WTC11 (cell line): ENCODE measurements at regions of chr5 and their contacts with region 1.

Region 1: GRCh38 chr5:170225326-170226128 is 7.3 kb upstream of the C5orf58 start:
- DNase-seq: peak; percentile 81
- ATAC-seq: peak; percentile 60
- H3K4me3 Mint-ChIP-seq: no peak overlapping the region
- H3K27ac Mint-ChIP-seq: no peak overlapping the region
- H3K4me1 Mint-ChIP-seq: peaks cover 60% of the 10 kb centered on the region
- H3K27me3 Mint-ChIP-seq: peaks cover 6% of the 10 kb centered on the region
- CTCF ChIP-seq: peak; percentile 53; the same call in 1 of the 2 replicates

Region 2: DNA sequence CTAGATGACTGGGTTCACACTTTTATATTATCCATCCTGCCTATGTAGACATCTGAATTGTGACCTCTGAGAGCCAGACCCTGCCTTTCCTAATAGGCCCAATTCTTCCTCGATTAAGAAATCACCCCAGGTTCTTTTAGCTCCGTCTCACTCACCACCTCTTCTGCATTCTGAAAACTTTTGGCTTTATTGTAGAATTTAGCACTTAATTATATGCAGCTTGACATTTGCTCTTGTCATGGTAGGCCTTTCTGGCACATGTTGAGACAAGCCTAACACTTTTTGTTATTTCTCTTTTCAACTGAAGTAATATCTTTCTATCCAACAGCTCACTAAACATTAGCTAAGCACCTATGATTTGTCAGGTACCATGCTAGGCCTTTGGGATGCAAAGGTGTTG is 408.5 kb before region 1 on chr5:
- CTCF ChIA-PET with region 1: no interaction called
- POLR2A ChIA-PET with region 1: no interaction called
- DNase-seq: no peak
- ATAC-seq: no peak
- H3K4me3 Mint-ChIP-seq: no peak overlapping the region
- H3K27ac Mint-ChIP-seq: no peak overlapping the region
- H3K4me1 Mint-ChIP-seq: peaks cover 18% of the 10 kb centered on the region
- H3K27me3 Mint-ChIP-seq: peaks cover 8% of the 10 kb centered on the region; the same call in 1 of the 2 replicates
- CTCF ChIP-seq: no peak

Region 3: DNA sequence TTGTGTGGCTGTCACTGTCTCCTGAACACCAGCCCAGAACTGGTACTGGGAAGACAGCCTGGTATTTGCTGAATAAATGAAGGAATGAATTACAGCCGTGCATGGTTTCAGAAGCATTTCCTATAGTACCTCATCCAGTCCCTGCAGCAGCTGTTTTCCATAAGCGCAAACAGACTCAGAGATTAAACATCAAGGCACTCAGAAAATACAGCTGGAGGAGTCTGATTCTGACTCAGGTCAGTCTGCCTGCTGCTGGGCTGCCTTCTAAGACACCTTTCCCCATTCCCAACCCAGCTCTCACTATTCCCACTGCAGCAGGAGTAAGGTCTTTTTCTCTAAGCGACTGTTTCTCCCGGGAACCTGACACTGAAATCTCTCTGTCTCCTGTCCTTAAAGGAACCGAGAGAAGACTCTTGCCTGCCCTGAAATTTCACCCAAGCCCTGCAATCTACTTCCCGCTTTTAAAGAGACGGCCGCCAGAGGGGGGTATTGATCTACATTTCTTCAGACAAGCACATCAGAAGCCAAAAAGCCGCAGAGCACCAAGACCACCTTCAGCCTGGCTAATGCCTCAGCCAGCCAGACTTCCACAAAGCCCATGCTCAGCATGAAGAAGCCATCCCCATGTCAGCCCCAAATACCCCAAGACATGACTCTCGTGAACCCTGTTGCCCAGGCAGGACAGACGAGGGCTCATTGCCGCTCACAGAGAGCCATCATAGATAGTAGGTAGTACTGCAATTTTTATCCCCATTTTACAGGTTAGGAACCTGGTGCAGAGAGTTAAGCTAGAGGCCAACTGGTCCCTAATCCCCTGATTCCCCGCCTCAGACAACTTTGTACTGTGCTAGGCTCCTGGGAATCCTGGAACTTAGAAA is 125.2 kb before region 1 on chr5:
- CTCF ChIA-PET with region 1: interaction called, 12 read pairs
- POLR2A ChIA-PET with region 1: no interaction called
- DNase-seq: peak; percentile 90
- ATAC-seq: peak; percentile 89
- H3K4me3 Mint-ChIP-seq: no peak overlapping the region
- H3K27ac Mint-ChIP-seq: no peak overlapping the region
- H3K4me1 Mint-ChIP-seq: peaks cover 8% of the 10 kb centered on the region
- H3K27me3 Mint-ChIP-seq: peaks cover 5% of the 10 kb centered on the region; the same call in 1 of the 2 replicates
- CTCF ChIP-seq: peak; percentile 68

Region 4: GRCh38 chr5:170267431-170268152 is 42.1 kb after region 1 on chr5:
- CTCF ChIA-PET with region 1: interaction called, 64 read pairs
- POLR2A ChIA-PET with region 1: no interaction called
- DNase-seq: peak; percentile 84
- ATAC-seq: peak; percentile 88
- H3K4me3 Mint-ChIP-seq: no peak overlapping the region
- H3K27ac Mint-ChIP-seq: no peak overlapping the region
- H3K4me1 Mint-ChIP-seq: peaks cover 57% of the 10 kb centered on the region
- H3K27me3 Mint-ChIP-seq: peaks cover 4% of the 10 kb centered on the region; the same call in 1 of the 2 replicates
- CTCF ChIP-seq: peak; percentile 81

Region 5: DNA sequence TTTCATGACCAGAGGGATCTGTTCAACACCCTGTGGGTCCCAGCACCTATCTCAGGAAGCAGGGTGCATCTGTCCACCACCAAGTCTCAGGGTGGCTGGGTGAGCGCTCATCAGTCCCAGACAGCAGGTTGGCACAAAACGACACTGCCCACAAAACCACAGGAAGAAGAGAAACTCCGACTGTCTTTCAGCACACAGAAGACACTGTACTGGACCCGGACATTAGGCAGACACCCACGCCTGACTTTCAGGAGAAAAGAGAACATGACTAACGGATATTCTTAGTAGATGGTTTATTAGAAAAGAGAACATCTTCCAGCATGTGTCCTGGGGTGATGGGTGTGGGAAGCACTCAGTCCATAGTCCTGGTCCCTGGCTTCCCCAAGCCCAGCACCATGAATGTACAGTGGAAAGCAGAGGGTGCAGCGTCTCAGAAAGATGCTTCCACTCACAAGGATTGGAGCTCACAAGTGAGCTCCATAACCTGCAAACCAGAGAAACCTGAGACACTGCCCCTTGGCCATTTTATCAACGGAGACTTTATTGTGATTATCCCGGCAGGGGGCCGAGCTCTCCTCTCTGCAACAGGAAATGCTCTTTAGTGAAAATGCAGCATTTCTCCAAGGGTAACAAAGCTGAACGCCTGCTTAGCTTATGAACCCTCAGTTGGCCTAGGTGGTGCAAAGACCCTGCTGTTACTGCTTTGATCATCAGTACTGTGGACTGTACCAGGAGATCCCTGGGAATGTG is 107.8 kb after region 1 on chr5:
- CTCF ChIA-PET with region 1: interaction called, 92 read pairs
- POLR2A ChIA-PET with region 1: no interaction called
- DNase-seq: peak; percentile 61
- ATAC-seq: peak; percentile 40
- H3K4me3 Mint-ChIP-seq: peak overlapping the region; percentile 47
- H3K27ac Mint-ChIP-seq: peak overlapping the region; percentile 96
- H3K4me1 Mint-ChIP-seq: peaks cover 75% of the 10 kb centered on the region
- H3K27me3 Mint-ChIP-seq: no peaks in the 10 kb centered on the region; the same call in 1 of the 2 replicates
- CTCF ChIP-seq: no peak

Region 6: DNA sequence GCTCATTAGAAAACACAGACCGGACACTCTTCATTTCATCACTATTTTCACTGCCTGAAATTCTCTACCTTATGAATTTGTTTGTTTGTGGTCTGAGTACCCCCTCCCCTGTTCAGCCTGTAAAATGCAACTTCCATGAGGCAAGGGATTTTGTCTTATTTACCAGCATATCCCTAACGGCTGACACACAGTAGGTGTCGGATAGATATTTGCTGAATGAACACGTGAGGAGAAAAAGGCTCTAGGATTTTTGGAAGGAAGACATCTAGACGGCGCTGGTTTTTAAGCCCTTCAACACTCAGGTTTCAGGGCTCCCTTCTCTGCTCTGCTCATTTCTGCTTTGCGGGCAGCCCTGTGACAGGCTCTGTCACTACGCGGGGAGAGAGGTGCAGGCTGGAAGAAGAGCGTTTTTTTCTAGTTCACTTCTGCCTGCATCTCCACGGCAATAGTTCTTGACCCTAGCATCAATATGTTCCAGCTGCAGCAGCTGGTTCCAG is 122.7 kb after region 1 on chr5:
- CTCF ChIA-PET with region 1: interaction called, 24 read pairs
- POLR2A ChIA-PET with region 1: no interaction called
- DNase-seq: no peak
- ATAC-seq: no peak
- H3K4me3 Mint-ChIP-seq: no peak overlapping the region
- H3K27ac Mint-ChIP-seq: no peak overlapping the region
- H3K4me1 Mint-ChIP-seq: peaks cover 46% of the 10 kb centered on the region
- H3K27me3 Mint-ChIP-seq: peaks cover 7% of the 10 kb centered on the region
- CTCF ChIP-seq: no peak

Region 7: GRCh38 chr5:170420780-170421412 is 195.4 kb after region 1 on chr5:
- CTCF ChIA-PET with region 1: interaction called, 56 read pairs
- POLR2A ChIA-PET with region 1: interaction called, 3 read pairs
- DNase-seq: peak; percentile 73
- ATAC-seq: peak; percentile 94
- H3K4me3 Mint-ChIP-seq: no peak overlapping the region
- H3K27ac Mint-ChIP-seq: no peak overlapping the region
- H3K4me1 Mint-ChIP-seq: peaks cover 21% of the 10 kb centered on the region
- H3K27me3 Mint-ChIP-seq: no peaks in the 10 kb centered on the region
- CTCF ChIP-seq: peak; percentile 63

Region 8: DNA sequence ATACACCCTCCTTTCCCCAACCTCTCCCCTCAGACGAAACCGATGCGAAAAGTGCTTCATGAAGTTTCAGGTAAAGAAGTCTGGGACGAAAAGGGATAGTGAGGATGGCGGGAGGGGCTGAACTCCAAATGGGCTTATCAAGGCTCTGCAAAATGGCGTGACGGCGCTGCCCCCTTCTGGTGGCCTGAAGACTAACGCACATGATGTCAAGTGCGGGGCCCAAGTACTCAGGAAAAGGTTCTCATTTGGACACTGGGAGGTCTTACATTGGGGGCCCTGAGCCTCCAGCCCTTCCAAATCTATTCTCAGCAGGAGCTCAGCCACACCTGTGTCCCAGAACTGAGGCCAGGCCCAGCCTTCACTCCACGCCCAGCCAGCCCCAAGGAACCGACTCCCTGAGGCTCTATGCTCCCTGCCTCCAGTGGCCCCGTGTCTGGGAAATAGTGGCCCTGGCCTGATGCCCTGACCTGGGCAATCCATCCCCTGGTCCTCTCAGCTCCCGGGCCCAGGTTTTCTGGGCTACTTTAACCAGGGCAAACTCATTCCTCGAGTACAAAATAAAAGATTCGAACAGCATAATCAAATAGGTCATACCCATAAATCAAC is 398.2 kb after region 1 on chr5:
- CTCF ChIA-PET with region 1: interaction called, 10 read pairs
- POLR2A ChIA-PET with region 1: no interaction called
- DNase-seq: peak; percentile 82
- ATAC-seq: peak; percentile 89
- H3K4me3 Mint-ChIP-seq: no peak overlapping the region
- H3K27ac Mint-ChIP-seq: no peak overlapping the region
- H3K4me1 Mint-ChIP-seq: peaks cover 19% of the 10 kb centered on the region
- H3K27me3 Mint-ChIP-seq: peaks cover 11% of the 10 kb centered on the region
- CTCF ChIP-seq: peak; percentile 79